Motor neuron (in vitro differentiated cells): ENCODE measurements at regions of chr7 and their contacts with region 1.

Region 1: DNA sequence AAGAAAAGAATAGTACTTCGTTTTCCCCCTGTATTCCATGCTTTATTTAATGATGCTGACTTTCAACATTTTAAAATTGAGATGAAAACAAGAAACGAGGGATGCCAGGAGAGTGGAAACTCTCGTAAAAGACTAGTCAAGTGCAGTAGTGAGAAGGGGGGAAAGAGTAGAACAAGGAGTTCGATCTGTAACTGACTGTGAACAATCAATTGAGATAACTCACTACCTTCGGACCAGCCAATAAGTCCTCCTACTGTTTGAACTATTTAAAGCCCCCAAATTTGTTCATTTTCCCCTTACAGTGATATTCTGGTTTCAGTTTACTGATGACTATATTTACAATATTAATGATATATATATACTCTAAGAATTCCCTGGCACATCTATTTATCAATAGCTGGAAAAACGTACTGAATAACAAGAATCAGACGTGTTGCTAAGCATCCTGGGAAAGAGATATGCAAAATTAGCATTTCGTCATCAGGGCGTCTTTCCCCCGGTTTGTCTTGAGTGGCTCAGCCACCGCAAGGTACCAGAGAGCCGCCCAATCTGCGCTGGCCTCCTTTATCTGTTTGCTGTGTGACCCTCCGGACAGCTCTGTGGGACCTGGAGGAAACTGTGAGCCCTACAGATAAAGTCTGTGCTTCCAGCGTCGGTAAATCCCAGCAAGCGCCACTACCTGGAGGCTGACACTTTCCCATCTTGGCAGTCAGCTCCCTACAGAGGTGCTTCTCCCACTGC is 41.1 kb downstream of the PDIA4 start:
- ATAC-seq: peak; percentile 80 to 88 (median 82)
- H3K4me3 ChIP-seq: peak overlapping the region; percentile 42 to 56 (median 53)
- H3K27ac ChIP-seq: peak overlapping the region; percentile 94 to 98
- H3K4me1 ChIP-seq: peaks cover 12 to 13% of the 10 kb centered on the region in 2 donors

Region 2: GRCh38 chr7:148503875-148504487 is 483.2 kb before region 1 on chr7:
- in situ Hi-C with region 1: loop called in 1 of 9 experiments (anchors 25 kb)
- ATAC-seq: no peak
- H3K4me3 ChIP-seq: no peak overlapping the region
- H3K27ac ChIP-seq: no peak overlapping the region
- H3K4me1 ChIP-seq: peaks cover 3 to 39% of the 10 kb centered on the region in 2 donors

Region 3: DNA sequence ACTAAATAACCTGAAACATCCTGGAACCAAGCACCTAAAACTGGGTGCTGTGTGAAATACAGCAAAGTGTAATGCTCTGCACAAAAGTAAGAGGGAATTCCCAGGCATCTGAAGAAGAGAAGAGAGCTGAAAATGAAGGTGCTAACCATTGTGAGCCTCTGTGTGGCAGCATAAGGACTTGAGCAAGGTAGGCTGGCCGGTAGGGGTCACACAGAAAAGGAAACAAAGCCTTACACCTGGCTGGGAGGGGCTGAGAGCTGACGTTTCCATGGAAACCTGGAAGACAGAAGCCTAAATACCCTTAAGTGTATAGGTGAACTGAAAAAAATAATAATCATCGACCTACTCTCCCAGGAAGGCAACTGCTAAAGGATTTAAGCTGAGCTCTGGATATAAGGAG is 239.9 kb before region 1 on chr7:
- in situ Hi-C with region 1: no loop called
- ATAC-seq: peak in 2 of 8 experiments; percentile 28 to 33
- H3K4me3 ChIP-seq: no peak overlapping the region
- H3K27ac ChIP-seq: no peak overlapping the region
- H3K4me1 ChIP-seq: no peaks in the 10 kb centered on the region

Region 4: DNA sequence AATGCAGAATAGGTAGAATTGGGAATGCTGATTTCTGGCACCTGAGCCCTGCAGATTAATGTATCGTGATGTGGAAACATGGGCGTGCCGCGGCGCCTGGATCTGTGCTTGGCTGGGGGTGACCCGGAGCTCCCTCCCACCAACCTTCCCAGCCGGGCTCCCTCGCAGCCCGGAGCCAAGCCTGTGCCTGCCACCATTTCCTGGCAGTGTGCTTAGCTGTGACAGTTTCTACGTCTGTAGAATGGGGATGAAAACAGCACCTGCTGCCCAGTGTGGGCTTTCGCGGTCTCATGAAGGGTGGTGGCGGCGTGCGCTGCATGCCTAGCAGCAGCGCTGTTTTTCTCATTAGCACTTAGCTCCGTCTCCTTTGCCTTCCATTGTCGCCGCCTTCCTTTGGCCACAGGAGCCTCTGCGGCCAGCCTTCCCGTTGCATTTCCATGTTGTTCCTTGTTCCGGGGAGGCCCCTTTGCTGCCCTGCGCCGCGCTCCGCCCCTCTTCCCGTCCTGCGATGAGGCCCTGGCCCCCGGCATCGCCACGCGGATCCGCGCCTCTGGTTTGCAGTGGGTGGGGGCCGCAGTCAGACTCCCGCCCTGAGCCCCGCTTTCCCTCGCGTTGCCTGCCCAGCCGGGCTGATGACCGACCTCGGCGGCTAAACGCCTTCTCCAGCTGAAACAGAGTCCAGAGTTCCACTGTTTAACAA is 204.3 kb before region 1 on chr7:
- in situ Hi-C with region 1: no loop called
- ATAC-seq: peak in 3 of 8 experiments; percentile 26 to 95 (median 93)
- H3K4me3 ChIP-seq: peak overlapping the region in 2 of 5 donors; percentile 24 to 30
- H3K27ac ChIP-seq: no peak overlapping the region
- H3K4me1 ChIP-seq: no peaks in the 10 kb centered on the region

Region 5: GRCh38 chr7:149090397-149091195 is 103.4 kb after region 1 on chr7 and contains the start of gene ZNF786:
- in situ Hi-C with region 1: no loop called
- ATAC-seq: peak; percentile 78 to 94 (median 92)
- H3K4me3 ChIP-seq: peak within 1 kb of the TSS; percentile 72 to 82 (median 80)
- H3K27ac ChIP-seq: peak within 1 kb of the TSS; percentile 88 to 91
- H3K4me1 ChIP-seq: peaks cover 4 to 5% of the 10 kb centered on the region in 2 donors
- total RNA-seq, gene ZNF786: 2.5 to 15.6 (median 7.1) TPM

Region 6: GRCh38 chr7:149317986-149318672 is 330.9 kb after region 1 on chr7:
- in situ Hi-C with region 1: no loop called
- ATAC-seq: peak in 1 of 8 experiments; percentile 29
- H3K4me3 ChIP-seq: no peak overlapping the region
- H3K27ac ChIP-seq: no peak overlapping the region
- H3K4me1 ChIP-seq: no peaks in the 10 kb centered on the region